ENCODE measurements at regions of chr14 and their contacts with region 1.

Region 1: GRCh38 chr14:32076278-32077080 is 625 bp upstream of the ARHGAP5 start:
- DNase-seq: peak; percentile 98
- ATAC-seq: peak; percentile 78
- H3K4me3 ChIP-seq: peak overlapping the region; percentile 90 to 99 (median 99)
- H3K27ac ChIP-seq: peak overlapping the region; percentile 86
- H3K4me1 ChIP-seq: peaks cover 39% of the 10 kb centered on the region
- H3K27me3 ChIP-seq: peaks cover 0 to 6% of the 10 kb centered on the region in 2 experiments; a peak in 1 of 5 replicates
- CTCF ChIP-seq: 0 out of 2 replicates have a peak, but pooled peaks have one; percentile 13
- EP300 ChIP-seq: peak in 1 of 2 experiments; percentile 54; a peak in 1 of 4 replicates
- POLR2A ChIP-seq: no peak; a peak in 2 of 4 replicates
- RAD21 ChIP-seq: no peak; the same call in none of the 2 replicates

Region 2: GRCh38 chr14:31420319-31421111 is 656.0 kb before region 1 on chr14 and contains the start of gene HEATR5A:
- CTCF ChIA-PET with region 1: no interaction called
- POLR2A ChIA-PET with region 1: interaction called, 23 read pairs
- in situ Hi-C with region 1: no loop called
- intact Hi-C with region 1: loop called (anchors 5 kb)
- DNase-seq: peak; percentile 98
- ATAC-seq: peak; percentile 90
- H3K4me3 ChIP-seq: peak within 1 kb of the TSS; percentile 73 to 99 (median 85)
- H3K27ac ChIP-seq: peak within 1 kb of the TSS; percentile 89
- H3K4me1 ChIP-seq: peaks cover 27% of the 10 kb centered on the region
- H3K27me3 ChIP-seq: no peaks in the 10 kb centered on the region; a peak in 1 of 5 replicates
- CTCF ChIP-seq: peak; percentile 76
- EP300 ChIP-seq: peak in 1 of 2 experiments; percentile 87; a peak in 1 of 4 replicates
- POLR2A ChIP-seq: peak in 1 of 2 experiments; percentile 99; a peak in 2 of 4 replicates
- RAD21 ChIP-seq: peak; percentile 74
- total RNA-seq, gene HEATR5A: 105 and 172 TPM in 2 replicates

Region 3: DNA sequence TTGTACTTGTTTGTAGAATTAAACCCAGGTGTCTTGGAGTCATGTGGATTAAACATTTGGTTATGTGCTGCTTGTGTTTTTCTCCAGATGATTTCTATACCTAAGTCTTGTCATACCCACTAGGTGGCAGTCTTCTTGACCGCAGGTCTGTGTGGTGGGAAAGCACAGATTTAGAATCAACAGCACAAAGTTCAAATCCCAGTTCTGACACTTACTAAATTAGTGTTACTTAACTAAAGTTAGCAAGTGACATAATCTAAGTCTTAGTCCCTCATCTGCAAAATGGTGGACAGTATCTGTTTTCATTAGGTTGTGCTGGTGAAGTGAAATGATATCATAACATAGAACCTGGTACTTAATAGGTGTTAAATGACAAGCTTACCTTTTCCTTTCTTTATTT is 150.4 kb before region 1 on chr14:
- CTCF ChIA-PET with region 1: interaction called, 10 read pairs
- POLR2A ChIA-PET with region 1: no interaction called
- in situ Hi-C with region 1: loop called (anchors 5 kb)
- intact Hi-C with region 1: loop called (anchors 2 kb)
- DNase-seq: peak; percentile 87
- ATAC-seq: peak; percentile 80
- H3K4me3 ChIP-seq: no peak overlapping the region
- H3K27ac ChIP-seq: no peak overlapping the region
- H3K4me1 ChIP-seq: peaks cover 14% of the 10 kb centered on the region; the same call in 1 of the 2 replicates
- H3K27me3 ChIP-seq: no peaks in the 10 kb centered on the region; a peak in 1 of 5 replicates
- CTCF ChIP-seq: peak; percentile 86
- EP300 ChIP-seq: no peak
- POLR2A ChIP-seq: no peak
- RAD21 ChIP-seq: peak; percentile 85

Region 4: GRCh38 chr14:32087173-32087861 is 10.8 kb after region 1 on chr14:
- CTCF ChIA-PET with region 1: no interaction called
- POLR2A ChIA-PET with region 1: interaction called, 9 read pairs
- in situ Hi-C with region 1: no loop called
- intact Hi-C with region 1: loop called (anchors 1 kb)
- DNase-seq: peak; percentile 73
- ATAC-seq: peak; percentile 6; the same call in 1 of the 3 replicates
- H3K4me3 ChIP-seq: no peak overlapping the region
- H3K27ac ChIP-seq: no peak overlapping the region
- H3K4me1 ChIP-seq: peaks cover 53% of the 10 kb centered on the region
- H3K27me3 ChIP-seq: no peaks in the 10 kb centered on the region
- CTCF ChIP-seq: no peak
- EP300 ChIP-seq: no peak
- POLR2A ChIP-seq: no peak
- RAD21 ChIP-seq: no peak

Region 5: GRCh38 chr14:32224737-32225377 is 148.4 kb after region 1 on chr14:
- CTCF ChIA-PET with region 1: interaction called, 4 read pairs
- POLR2A ChIA-PET with region 1: no interaction called
- in situ Hi-C with region 1: no loop called
- intact Hi-C with region 1: loop called (anchors 1 kb)
- DNase-seq: peak; percentile 68
- ATAC-seq: peak; percentile 99
- H3K4me3 ChIP-seq: no peak overlapping the region
- H3K27ac ChIP-seq: no peak overlapping the region
- H3K4me1 ChIP-seq: peaks cover 6% of the 10 kb centered on the region; the same call in 1 of the 2 replicates
- H3K27me3 ChIP-seq: no peaks in the 10 kb centered on the region
- CTCF ChIP-seq: peak; percentile 64
- EP300 ChIP-seq: no peak
- POLR2A ChIP-seq: no peak
- RAD21 ChIP-seq: peak; percentile 38; the same call in 1 of the 2 replicates

Region 6: DNA sequence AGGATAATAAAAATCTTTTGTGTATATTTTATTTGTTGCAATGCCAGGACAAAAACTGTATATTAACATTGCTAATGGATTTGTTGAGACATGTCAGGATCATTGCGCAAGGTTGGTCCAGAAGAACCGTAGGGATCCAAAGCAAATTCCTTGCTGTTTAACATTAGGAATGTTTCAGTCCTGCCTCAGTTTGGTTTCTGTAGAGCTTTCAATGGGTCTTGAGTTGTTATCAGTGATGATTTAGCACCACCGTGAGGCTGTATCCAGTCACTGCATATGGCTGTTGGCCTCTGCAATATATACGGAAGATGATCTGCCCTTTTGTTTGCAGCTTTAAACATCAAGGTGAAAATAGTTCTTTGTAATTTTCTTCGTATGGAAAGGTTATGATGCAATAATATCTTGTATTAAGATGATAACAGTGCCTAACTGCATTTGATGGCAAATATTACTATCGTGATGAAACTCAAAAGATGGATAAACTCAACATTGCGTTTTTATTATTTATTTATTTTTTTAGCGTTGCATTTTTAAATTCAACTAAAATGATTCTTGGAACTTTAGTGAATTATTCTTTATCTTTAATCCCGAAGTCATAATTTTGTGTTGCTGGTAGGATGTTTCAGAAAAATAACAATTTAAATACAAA is 483.9 kb after region 1 on chr14:
- CTCF ChIA-PET with region 1: interaction called, 6 read pairs
- POLR2A ChIA-PET with region 1: no interaction called
- in situ Hi-C with region 1: loop called (anchors 5 kb)
- intact Hi-C with region 1: loop called (anchors 1 kb)
- DNase-seq: peak; percentile 82
- ATAC-seq: peak; percentile 98
- H3K4me3 ChIP-seq: no peak overlapping the region
- H3K27ac ChIP-seq: no peak overlapping the region
- H3K4me1 ChIP-seq: no peaks in the 10 kb centered on the region
- H3K27me3 ChIP-seq: no peaks in the 10 kb centered on the region
- CTCF ChIP-seq: peak; percentile 98
- EP300 ChIP-seq: no peak
- POLR2A ChIP-seq: no peak
- RAD21 ChIP-seq: peak; percentile 87